ENCODE measurements at regions of chr3 and their contacts with region 1.

Region 1: DNA sequence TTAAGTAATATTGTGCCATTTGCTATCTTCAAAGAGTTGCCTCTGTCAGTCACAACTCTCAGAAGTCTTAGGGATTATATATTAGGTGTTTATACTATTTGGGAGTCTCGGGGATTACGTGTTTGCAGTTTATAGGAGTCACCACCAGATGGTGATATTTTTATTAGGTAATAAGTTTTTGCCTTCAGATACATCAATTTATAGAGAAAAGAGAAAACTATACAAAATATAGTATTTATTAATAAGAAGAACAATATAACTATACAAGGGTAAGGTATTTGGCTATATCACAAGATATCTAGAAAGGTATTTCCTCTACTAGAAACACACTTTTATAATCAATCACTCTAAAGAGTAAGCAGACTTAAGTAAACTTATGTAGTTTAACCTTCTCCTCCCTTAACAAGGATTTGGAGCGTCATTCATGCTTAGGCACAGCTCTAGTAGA is 10.7 kb upstream of the DHX36 start:
- DNase-seq: peak in 1 of 2 experiments; percentile 68
- H3K4me3 ChIP-seq: no peak overlapping the region
- H3K4me1 ChIP-seq: no peaks in the 10 kb centered on the region
- H3K27me3 ChIP-seq: peaks cover 4% of the 10 kb centered on the region; the same call in 1 of the 2 replicates

Region 2: GRCh38 chr3:152574461-152575079 is 1760.4 kb before region 1 on chr3:
- in situ Hi-C with region 1: no loop called
- DNase-seq: peak; percentile 29 to 38
- H3K4me3 ChIP-seq: no peak overlapping the region
- H3K4me1 ChIP-seq: no peaks in the 10 kb centered on the region
- H3K27me3 ChIP-seq: peaks cover 6% of the 10 kb centered on the region

Region 3: DNA sequence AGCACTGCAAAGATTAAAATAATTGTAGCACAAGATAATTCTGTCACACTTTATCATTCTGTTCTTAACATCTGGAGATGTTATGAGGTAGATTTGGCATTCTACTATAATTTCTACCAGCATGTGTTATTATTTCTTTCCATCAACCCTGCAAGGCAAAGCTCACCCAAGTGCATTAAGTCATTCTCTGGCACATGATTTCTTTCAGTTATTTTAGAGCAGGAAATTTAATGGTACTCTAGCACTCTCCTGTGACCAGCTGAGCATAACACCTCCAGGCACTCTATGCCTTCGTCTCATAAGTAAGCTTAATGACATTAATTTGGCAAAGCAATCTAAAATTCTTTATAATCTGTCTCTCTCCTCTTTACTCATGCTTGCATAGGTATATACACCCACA is 395.2 kb after region 1 on chr3:
- in situ Hi-C with region 1: loop called (anchors 25 kb)
- DNase-seq: no peak
- H3K4me3 ChIP-seq: no peak overlapping the region
- H3K4me1 ChIP-seq: no peaks in the 10 kb centered on the region
- H3K27me3 ChIP-seq: no peaks in the 10 kb centered on the region

Measured in HAP-1 (cell line).